Activated T-helper 1 cell treated with anti-CD3 and anti-CD28 coated beads, Interleukin-12 subunit alpha, Interleukin-12 subunit beta, Interleukin-2, Interleukin-4 antibody, amounts not matched to agents 30 ng/mL and 10 ng/mL and 1 ng/mL, durations not matched to agents 14 hours and 24 hours and 36 hours (primary cell): ENCODE measurements at regions of chr15 and their contacts with region 1.

Region 1: DNA sequence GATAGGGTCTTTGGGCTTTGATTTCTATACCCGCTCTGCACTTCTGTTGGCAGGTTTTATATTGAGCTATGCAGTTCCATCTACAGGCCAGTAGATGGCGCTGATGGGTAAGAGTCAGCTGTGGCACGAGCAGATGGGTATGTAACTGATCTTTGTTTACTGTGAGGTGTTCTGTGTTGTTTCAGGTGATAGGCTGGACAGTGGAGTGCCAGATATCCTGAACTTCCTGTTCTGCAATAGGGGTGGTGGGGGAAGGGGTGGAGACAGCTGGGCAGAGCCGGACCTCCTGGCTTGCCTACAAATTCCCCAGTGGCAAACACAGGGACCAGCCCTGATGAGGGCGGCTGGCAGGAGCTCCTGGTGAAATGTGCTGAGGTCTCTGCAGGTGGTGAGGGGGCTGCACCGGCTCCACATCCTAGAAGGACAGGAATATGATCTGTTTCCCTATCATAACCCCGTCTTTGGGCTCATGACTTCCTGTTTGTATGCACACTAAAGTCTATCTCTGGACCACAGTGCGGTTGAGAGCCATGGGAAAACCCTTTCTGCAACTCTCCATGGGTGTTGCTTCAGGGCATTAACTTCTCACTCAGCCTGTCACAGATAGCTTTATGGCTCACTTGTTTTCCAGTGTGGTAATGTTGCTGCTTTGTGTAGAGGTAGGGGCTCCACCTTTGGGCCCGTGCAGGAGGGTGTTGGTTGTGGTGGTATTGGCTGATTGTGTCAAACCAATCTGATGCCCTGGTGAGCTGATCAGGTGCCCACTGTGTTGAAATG is 13.4 kb upstream of the FAM98B start:
- DNase-seq: peak; percentile 38
- H3K4me3 Mint-ChIP-seq: no peak overlapping the region
- H3K27ac Mint-ChIP-seq: peak overlapping the region; percentile 56
- H3K4me1 Mint-ChIP-seq: peaks cover 18% of the 10 kb centered on the region
- H3K27me3 Mint-ChIP-seq: peaks cover 50% of the 10 kb centered on the region

Region 2: GRCh38 chr15:38207621-38208020 is 232.9 kb before region 1 on chr15:
- intact Hi-C with region 1: no loop called
- DNase-seq: no peak
- H3K4me3 Mint-ChIP-seq: no peak overlapping the region
- H3K27ac Mint-ChIP-seq: no peak overlapping the region
- H3K4me1 Mint-ChIP-seq: no peaks in the 10 kb centered on the region
- H3K27me3 Mint-ChIP-seq: peaks cover 16% of the 10 kb centered on the region

Region 3: GRCh38 chr15:38453971-38454695 is 13.6 kb after region 1 on chr15 and contains the start of gene FAM98B:
- intact Hi-C with region 1: loop called (anchors 1 kb)
- DNase-seq: peak; percentile 85
- H3K4me3 Mint-ChIP-seq: peak within 1 kb of the TSS; percentile 96
- H3K27ac Mint-ChIP-seq: peak within 1 kb of the TSS; percentile 95
- H3K4me1 Mint-ChIP-seq: peaks cover 22% of the 10 kb centered on the region
- H3K27me3 Mint-ChIP-seq: peaks cover 19% of the 10 kb centered on the region
- total RNA-seq, gene FAM98B: 64.4 and 66.9 TPM in 2 replicates

Region 4: DNA sequence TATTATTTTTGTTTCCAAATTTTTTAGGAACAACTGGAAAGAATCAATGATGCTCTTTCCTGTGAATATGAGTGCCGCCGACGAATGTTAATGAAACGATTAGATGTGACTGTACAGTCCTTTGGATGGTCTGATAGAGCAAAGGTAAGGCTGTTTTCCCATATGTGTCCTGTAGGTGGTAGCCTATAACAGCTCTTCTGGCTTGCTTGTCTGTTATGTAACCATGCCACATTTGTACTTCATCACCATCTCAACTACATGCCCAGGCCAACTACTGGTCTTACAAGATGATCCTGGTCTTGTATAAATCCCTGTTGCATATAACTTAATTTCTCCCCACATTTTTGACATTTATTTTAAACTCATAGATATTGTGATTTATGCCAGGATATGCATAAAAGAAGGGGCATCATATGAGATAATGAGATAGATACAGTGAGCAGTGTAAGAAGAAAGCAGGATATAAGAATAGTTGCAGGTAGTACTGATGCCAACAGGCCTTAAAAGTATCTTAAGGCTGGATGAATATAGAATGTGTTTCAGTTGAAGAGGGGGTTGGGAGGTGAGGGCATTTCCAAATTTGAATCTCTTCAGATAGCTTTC is 33.7 kb after region 1 on chr15:
- intact Hi-C with region 1: loop called (anchors 1 kb)
- DNase-seq: peak; percentile 29
- H3K4me3 Mint-ChIP-seq: no peak overlapping the region
- H3K27ac Mint-ChIP-seq: peak overlapping the region; percentile 41
- H3K4me1 Mint-ChIP-seq: peaks cover 20% of the 10 kb centered on the region
- H3K27me3 Mint-ChIP-seq: no peaks in the 10 kb centered on the region

Region 5: DNA sequence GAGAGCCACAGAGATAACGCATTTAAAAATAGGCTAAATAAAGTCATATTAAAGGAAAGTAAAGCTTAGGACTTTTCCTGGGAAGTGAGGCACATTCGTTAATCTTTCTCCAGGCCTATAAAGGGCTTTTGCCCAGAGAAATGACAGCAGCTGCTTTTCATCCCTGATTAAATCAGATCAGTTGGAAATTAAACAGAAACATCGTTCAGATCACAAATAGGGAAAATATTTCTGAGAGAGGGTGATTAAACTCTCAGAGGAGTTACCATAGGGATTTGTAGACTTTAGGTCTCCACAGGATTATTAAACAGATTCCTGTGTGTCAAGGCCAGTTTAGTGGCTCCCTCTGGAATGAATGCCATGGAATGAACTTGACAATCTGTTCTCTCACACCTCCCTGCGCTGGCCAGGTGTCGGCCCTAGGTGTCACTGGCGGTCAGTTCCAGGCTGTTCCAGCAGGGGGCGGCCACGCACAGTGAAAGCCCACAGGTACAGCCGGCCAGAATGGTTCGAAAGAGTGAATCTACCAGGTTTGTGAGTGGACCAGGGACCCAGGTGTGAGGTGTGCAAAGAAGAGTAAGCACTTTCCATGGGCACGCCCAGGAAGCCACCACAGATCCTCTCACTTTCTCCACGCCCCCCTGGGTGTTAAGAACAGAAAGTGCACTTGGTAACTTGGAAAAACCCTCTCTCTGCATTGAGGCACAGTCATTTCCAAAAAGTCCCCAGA is 377.1 kb after region 1 on chr15:
- intact Hi-C with region 1: loop called (anchors 5 kb)
- DNase-seq: peak; percentile 66
- H3K4me3 Mint-ChIP-seq: no peak overlapping the region
- H3K27ac Mint-ChIP-seq: no peak overlapping the region
- H3K4me1 Mint-ChIP-seq: peaks cover 4% of the 10 kb centered on the region
- H3K27me3 Mint-ChIP-seq: peaks cover 14% of the 10 kb centered on the region